Activated naive CD8-positive, alpha-beta T cell treated with anti-CD3 and anti-CD28 coated beads, Interleukin-2, amount 10 ng/mL, durations not matched to agents 7 days and 5 days (primary cell): ENCODE measurements at regions of chr16 and their contacts with region 1.

Region 1: GRCh38 chr16:20900299-20901067 is at the starts of genes DCUN1D3 and LYRM1:
- DNase-seq: peak; percentile 87
- ATAC-seq: peak; percentile 78
- H3K4me3 Mint-ChIP-seq: peak within 1 kb of the TSS; percentile 95
- H3K27ac Mint-ChIP-seq: peak within 1 kb of the TSS; percentile 99
- H3K4me1 Mint-ChIP-seq: peaks cover 72% of the 10 kb centered on the region
- H3K27me3 Mint-ChIP-seq: no peaks in the 10 kb centered on the region
- total RNA-seq, gene DCUN1D3: 12.0 to 13.1 TPM
- total RNA-seq, gene LYRM1: 24.9 to 26.9 TPM

Region 2: DNA sequence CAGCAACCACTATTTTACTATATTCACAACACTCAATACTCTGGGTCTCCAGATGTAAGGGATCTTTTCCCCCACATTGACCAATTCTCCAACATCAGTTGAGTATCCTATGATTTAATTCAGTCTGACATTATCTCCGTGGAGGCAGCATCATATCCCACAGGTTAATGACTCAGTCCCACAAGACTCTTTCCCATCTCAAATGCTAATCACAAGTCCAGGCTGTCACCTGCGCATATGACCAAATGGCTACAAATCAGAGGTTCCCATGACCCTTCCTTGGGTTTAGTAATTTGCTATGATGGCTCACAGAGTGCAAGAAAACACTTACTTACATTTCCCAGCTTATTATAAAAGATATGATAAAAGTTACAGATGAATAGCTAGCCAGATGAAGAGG is 118.0 kb before region 1 on chr16:
- POLR2A ChIA-PET with region 1: no interaction called
- DNase-seq: no peak
- ATAC-seq: no peak
- H3K4me3 Mint-ChIP-seq: no peak overlapping the region
- H3K27ac Mint-ChIP-seq: no peak overlapping the region
- H3K4me1 Mint-ChIP-seq: no peaks in the 10 kb centered on the region
- H3K27me3 Mint-ChIP-seq: no peaks in the 10 kb centered on the region

Region 3: GRCh38 chr16:20874088-20874581 is 26.3 kb before region 1 on chr16:
- POLR2A ChIA-PET with region 1: interaction called, 51 read pairs
- DNase-seq: no peak
- ATAC-seq: no peak
- H3K4me3 Mint-ChIP-seq: peak overlapping the region; percentile 86
- H3K27ac Mint-ChIP-seq: peak overlapping the region; percentile 97
- H3K4me1 Mint-ChIP-seq: peaks cover 65% of the 10 kb centered on the region
- H3K27me3 Mint-ChIP-seq: no peaks in the 10 kb centered on the region

Region 4: DNA sequence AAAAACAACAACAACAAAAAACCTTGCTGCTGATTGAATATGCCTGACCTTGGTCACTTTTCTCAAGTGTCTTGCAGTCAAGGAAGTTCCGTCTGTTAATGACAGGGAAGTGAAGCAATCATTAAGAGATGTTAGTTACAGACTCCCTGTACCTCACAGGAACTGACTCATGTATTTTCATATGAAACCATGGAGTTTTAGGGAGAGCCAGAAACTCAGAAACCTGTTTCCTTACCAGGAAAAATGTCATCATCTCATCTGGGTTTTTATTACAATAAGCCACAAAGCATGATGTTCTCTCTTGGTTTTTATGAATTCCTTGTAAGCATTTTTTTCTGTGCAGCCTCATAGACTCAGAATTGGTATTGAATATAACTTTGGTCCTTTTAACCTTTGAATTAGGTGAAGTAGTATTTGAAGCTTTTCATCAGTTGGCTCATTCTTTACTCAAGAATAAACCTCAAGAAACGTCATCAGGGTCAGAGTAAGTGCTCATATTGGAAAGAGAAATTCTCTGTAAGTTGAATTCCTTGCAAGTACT is 10.4 kb after region 1 on chr16:
- POLR2A ChIA-PET with region 1: interaction called, 31 read pairs
- DNase-seq: no peak
- ATAC-seq: peak; percentile 70
- H3K4me3 Mint-ChIP-seq: peak overlapping the region; percentile 52
- H3K27ac Mint-ChIP-seq: peak overlapping the region; percentile 79
- H3K4me1 Mint-ChIP-seq: peaks cover 50% of the 10 kb centered on the region
- H3K27me3 Mint-ChIP-seq: no peaks in the 10 kb centered on the region